Head of caudate nucleus (tissue), 42 donors: ENCODE measurements at regions of chr21 and their contacts with region 1.

Region 1: GRCh38 chr21:42593007-42593806 is 60.2 kb upstream of the PDE9A start:
- DNase-seq: peak; percentile 65 to 90 (median 80)

Region 2: DNA sequence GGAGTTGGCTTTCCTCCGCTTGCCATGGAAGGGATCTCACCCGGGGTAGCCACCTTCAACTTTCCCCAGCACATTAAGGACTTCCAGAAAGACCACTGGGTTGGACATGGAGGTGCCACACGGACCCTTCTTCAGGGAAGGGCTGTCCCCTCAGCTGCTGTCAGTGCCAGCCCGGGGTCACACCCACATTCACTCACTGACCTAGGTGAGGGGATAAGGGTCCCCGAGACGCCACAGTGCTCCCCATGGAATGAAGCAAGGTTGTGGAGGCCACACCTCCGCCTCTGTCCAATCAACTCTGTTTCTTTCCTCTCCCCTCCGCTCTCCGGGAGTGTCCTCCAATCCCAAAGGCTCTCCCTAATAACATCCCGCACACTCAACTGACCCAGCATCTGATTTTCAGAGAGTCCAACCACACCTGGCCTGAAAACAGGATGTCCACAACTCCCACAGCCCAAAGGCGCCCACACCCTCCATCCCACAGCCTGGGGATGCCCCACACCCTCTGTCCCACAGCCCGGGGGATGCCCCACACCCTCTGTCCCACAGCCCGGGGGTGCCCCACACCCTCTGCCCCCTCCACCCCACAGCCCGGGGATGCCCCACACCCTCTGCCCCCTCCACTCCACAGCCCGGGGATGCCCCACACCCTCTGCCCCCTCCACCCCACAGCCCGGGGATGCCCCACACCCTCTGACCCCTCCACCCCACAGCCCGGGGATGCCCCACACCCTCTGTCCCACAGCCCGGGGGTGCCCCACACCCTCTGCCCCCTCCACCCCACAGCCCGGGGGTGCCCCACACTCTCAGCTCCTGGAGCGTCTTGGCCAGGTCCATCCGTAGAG is 116.5 kb before region 1 on chr21:
- intact Hi-C with region 1: no loop called
- DNase-seq: peak in 1 of 42 donors; percentile 3

Region 3: GRCh38 chr21:42641311-42642218 is 48.4 kb after region 1 on chr21:
- intact Hi-C with region 1: loop called (anchors 10 kb)
- DNase-seq: peak in 21 of 42 donors; percentile 38 to 73 (median 51)